ENCODE measurements at regions of chr3 and their contacts with region 1.

Region 1: DNA sequence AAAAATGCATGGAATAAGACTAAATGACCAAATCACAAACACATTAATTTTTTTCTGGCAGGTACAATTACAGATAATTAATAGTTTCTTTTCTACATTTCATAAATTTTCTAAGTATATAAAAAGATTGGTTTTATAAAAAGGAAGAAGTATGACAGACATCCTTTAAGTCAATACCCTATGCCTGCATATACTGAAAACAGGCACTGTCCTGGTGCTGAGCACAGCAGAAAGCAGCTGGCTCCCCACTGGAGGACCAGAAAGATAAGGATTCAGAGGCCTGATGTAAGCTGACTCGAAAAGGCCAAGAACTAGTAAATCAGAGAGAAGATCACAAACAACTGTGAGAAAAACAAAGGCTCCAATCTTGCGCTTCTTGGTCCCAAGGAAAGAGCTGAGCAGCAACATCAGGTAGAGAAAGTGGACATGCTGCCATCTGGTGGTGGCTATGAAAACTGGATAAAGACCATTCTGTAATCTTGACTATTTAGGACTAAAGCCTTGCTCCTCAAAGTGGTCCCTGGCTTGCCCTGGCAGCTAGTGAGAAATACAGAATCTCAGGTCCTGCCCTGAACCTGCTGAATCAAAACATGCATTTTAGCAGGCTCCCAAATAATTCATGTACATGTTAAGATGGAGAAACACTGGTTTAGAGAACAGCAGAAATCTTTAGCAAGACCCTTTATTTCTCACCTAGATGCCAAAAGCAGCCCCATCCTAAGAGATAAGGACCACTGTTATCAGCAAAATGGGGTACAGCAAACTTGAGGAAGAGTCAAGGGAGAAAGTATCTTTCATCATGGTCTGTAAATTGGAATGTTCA is 76.0 kb downstream of the TRANK1 start:
- H3K4me3 ChIP-seq: no peak overlapping the region
- H3K27ac ChIP-seq: no peak overlapping the region
- H3K4me1 ChIP-seq: no peaks in the 10 kb centered on the region
- CTCF ChIP-seq: 0 out of 2 replicates have a peak, but pooled peaks have one; percentile 26

Region 2: DNA sequence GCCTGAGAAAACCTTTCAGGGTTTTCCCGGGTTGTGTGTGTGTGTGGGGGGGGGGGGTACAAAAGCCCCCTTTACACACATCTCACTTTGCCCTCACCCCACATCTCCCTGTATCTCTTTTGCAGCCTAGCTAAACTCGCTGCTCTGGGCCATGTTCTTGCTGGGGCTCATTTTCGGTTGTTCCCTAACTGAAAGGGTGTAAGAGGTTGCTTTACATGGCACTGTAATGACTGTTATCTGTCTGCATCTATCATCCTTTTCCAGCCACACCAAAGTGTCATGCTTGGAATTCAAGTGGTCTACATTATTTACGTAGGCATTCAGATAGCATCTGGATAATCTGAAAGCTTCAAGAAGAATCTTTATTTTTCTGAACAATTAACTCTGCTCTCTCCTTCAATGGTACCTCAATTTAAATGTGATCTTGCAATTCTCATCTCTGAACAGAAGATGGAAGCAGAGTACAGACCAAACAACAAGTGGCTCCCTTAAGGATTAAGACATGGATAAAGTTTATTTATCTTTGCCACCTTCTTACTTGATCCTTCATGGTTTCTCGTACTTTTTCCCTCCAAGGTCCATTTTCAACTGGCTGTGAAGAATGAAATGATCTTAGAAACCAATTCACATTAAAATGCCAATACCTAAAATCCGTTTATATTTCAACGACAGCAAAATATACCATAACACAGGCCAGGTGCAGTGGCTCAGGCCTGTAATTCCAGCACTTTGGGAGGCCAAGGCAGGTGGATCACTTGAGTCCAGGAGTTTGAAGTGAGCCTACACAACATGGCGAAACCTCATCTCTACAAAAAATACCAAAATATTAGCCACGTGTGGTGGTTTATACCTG is 139.4 kb before region 1 on chr3:
- CTCF ChIA-PET with region 1: interaction called, 45 read pairs
- POLR2A ChIA-PET with region 1: interaction called, 3 read pairs
- H3K4me3 ChIP-seq: no peak overlapping the region
- H3K27ac ChIP-seq: no peak overlapping the region
- H3K4me1 ChIP-seq: no peaks in the 10 kb centered on the region
- CTCF ChIP-seq: no peak

Region 3: DNA sequence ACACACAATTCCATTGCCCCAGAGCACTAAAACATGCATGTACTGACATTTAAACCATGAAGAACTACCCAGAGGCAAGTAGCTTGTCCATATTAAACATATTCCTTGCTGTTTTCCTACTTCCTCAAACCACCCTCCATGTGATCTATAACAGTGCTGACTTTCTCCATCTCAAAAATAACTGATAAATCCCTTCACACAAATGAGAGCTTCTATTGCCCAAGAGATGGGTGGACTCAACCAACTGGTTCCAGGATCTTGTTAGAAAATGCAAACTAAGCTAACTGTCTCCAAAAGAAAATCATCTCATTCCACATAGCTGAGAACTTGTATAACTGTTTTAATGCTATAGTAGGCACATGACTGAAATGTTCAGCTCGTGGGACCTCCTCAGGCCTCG is 134.1 kb before region 1 on chr3:
- CTCF ChIA-PET with region 1: interaction called, 45 read pairs
- POLR2A ChIA-PET with region 1: interaction called, 3 read pairs
- H3K4me3 ChIP-seq: no peak overlapping the region
- H3K27ac ChIP-seq: no peak overlapping the region
- H3K4me1 ChIP-seq: no peaks in the 10 kb centered on the region
- CTCF ChIP-seq: no peak

Region 4: GRCh38 chr3:36777424-36778218 is 91.2 kb before region 1 on chr3:
- CTCF ChIA-PET with region 1: interaction called, 11 read pairs
- POLR2A ChIA-PET with region 1: no interaction called
- H3K4me3 ChIP-seq: no peak overlapping the region
- H3K27ac ChIP-seq: no peak overlapping the region
- H3K4me1 ChIP-seq: no peaks in the 10 kb centered on the region
- CTCF ChIP-seq: no peak

Region 5: DNA sequence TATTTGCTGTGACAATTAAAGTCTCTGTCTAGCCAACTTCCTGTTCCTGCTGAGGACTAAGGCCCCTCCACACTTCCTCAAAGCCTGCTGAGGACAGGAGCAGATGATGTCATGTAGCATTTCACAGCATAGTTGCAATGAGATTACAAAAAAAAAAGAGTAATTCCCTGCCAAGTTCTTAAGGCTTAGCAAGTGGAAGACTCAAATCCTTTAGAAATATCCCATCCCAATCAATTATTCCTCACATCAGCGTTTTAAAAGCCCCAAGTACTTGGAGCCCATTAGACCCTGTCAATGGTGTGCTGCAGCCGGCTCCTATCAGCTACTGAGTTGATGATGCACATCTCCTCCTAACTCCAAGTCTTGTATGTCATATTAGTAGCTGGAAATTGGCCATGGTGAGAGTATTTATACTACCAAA is 24.3 kb after region 1 on chr3:
- CTCF ChIA-PET with region 1: interaction called, 10 read pairs
- POLR2A ChIA-PET with region 1: no interaction called
- H3K4me3 ChIP-seq: no peak overlapping the region
- H3K27ac ChIP-seq: no peak overlapping the region
- H3K4me1 ChIP-seq: no peaks in the 10 kb centered on the region
- CTCF ChIP-seq: no peak

Measured in HEK293 (cell line).